ENCODE measurements at regions of chr20 and their contacts with region 1.

Region 1: GRCh38 chr20:58209652-58210397 is 18.6 kb downstream of the ANKRD60 start:
- DNase-seq: peak; percentile 87 to 96
- ATAC-seq: peak; percentile 91
- H3K4me3 ChIP-seq: no peak overlapping the region
- H3K27ac ChIP-seq: no peak overlapping the region
- H3K4me1 ChIP-seq: no peaks in the 10 kb centered on the region
- H3K27me3 ChIP-seq: no peaks in the 10 kb centered on the region

Region 2: DNA sequence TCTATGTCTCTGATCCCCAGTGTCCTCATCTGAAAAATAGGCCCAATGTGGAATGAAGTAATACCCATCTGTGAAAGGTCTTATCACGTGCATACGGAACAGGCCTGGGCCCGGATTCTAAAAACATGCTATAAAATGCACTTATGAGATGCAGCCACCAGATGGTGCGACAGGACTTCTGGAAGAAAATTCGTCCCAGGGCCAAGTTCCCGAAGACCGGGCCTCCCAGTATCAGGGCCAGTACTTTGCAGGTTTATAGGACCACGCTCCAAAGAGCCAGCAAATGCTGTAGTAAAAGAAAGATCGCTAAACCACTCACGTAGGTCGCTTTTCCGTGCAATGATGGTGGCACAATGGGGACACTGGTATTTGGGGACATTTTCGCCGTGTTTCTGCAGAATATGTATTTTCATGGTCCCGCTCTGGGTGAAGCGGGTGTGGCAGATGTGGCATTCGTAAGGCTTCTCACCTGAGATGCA is 695.5 kb before region 1 on chr20:
- intact Hi-C with region 1: loop called (anchors 2 kb)
- DNase-seq: peak; percentile 74 to 86
- ATAC-seq: peak; percentile 86
- H3K4me3 ChIP-seq: no peak overlapping the region
- H3K27ac ChIP-seq: no peak overlapping the region
- H3K4me1 ChIP-seq: no peaks in the 10 kb centered on the region
- H3K27me3 ChIP-seq: no peaks in the 10 kb centered on the region